ENCODE measurements at regions of chr12 and their contacts with region 1.

Region 1: DNA sequence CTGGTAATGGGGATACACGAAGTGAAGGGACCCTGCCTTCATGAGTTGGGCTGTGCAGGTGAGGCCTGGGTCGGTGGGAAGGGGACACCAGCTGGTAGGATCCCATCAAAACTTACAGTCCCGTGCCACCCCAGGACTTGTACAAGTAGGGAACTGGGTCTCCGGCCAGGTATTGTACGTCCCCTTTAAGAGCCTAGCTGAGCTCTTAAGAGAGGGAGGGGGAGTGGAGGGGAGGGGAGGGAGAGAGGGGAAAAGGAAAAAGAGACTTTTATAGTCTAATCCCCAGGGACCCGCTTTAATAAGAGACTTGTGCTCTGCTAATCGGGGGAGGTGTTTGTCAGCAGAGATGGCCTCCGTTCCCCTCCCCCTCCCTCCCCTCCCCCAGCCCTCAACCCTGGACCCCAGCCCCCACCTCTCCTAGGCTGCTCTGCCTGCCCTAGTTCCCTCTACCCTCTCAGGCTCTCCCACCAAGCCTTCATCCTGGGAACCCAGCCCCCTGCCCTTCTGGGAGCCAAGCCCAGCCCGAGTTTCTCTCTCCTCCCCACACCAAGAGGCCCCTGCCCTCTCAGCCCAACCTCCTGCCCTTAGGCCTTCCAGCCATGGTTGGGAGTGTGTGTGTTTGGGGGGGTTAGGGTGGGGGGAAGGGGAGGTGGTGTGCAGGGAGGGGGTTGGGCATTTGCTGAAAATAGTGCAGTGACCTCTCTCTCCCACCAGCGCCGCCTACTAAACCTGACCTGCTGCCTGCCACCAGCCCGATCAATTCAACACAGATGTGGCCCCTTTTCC is 2.6 kb downstream of the GDF11 start:
- DNase-seq: no peak
- CTCF ChIP-seq: no peak

Region 2: DNA sequence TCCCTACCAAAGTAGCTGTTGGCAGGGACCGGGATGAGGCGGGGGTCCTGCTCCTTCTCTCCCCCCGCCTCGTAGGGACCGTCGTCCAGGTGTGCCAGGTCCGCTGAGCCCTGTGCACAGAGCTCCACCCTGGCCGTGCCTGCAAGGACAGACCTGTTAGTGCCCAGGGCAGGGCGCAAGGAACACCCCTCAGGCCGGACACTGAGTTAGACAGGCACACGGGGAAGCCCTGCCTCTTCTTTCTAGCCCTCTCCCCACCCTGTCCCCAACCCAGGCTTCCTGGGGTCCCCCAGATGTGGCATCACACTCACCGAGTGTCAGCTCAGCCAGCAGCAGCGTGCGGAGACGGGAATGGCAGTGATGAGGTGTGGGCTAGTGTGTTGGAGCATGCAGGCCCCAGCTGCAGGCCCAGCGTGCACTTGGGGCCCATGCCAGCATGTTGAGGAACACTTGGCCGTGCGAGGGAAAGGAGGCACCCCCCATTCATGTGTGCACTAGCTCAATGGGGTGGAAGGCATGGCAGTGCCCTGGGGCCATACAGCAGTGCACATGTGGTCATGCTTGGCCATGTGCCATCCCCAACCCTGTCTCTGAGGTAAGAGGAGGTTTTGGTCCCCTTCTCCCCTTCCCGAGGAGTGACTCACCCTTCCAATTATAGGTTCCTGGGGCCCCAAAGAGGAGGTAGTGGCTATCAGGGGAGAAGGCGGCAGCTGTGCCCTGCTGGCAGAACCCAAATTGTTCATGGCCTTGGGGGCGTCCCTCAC is 45.1 kb before region 1 on chr12:
- CTCF ChIA-PET with region 1: no interaction called
- POLR2A ChIA-PET with region 1: no interaction called
- DNase-seq: no peak
- CTCF ChIP-seq: no peak

Region 3: GRCh38 chr12:55757701-55758100 is 12.1 kb after region 1 on chr12:
- CTCF ChIA-PET with region 1: interaction called, 44 read pairs
- POLR2A ChIA-PET with region 1: no interaction called
- DNase-seq: no peak
- CTCF ChIP-seq: no peak

Measured in GM10248 (cell line).